ENCODE measurements at regions of chr7 and their contacts with region 1.

Region 1: GRCh38 chr7:50467817-50468610 is 17.9 kb upstream of the FIGNL1 start:
- DNase-seq: peak; percentile 66 to 85
- ATAC-seq: peak; percentile 97

Region 2: DNA sequence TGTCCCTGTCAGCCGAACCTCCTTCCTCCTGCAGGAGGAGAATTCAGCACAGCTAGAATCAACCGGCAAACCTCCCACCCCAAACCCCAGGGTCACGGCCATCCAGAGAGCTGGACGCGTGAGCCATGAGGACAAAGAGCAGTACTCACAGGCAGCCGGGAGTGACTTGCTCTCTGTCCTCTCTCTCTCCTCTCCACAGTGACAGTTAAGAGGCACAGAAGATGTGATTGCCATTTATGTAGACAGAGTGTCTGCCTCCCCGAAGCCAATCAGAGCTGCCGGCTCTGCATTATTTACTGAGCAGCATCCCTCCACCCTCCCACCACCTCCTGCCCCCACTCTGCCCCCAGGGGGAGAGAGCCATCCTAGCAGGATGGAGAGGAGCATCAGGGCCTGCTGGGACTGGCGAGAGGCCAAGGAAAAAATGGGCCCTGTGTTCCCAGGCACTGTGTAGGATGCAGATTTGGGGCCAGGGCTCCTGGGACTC is 92.9 kb after region 1 on chr7:
- intact Hi-C with region 1: no loop called
- DNase-seq: no peak
- ATAC-seq: no peak

Region 3: DNA sequence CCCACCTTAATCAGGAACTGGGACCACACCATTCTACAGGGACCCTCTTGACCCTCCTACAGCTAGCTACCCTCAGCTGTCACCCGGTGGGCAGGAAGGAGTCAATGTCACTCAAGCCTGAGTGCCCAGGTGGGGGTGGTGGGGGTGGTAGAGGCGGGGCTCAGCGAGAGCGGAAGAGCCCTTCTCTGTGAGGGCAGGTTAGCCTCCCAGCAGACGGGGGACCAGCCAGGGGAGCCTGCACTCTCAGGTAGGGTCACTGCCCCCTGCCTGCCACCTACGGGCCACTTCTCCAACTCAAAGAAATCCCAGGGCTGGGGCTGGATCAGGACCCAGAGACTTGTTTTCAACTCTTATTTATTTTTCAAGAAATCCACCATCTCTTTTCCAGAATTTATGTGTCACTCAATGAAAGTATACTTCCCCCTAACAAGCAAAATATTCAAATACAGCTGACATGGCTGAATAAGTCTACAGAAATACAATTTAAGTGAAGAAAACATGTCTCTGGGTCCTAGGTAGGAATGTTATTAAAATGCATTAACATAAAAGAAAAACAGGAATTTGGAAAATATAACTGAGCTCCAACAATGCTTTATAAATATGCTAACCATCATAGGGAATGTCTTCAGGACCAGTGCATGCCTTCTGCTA is 160.5 kb after region 1 on chr7:
- intact Hi-C with region 1: no loop called
- DNase-seq: no peak
- ATAC-seq: no peak

Region 4: GRCh38 chr7:50679218-50680007 is 211.4 kb after region 1 on chr7:
- intact Hi-C with region 1: loop called in 1 of 2 experiments (anchors 2 kb)
- DNase-seq: no peak
- ATAC-seq: peak; percentile 60

Region 5: GRCh38 chr7:51154201-51154600 is 686.2 kb after region 1 on chr7:
- intact Hi-C with region 1: loop called in 1 of 2 experiments (anchors 10 kb)
- DNase-seq: no peak
- ATAC-seq: no peak